Uterus (tissue), 4 donors: ENCODE measurements at regions of chr2 and their contacts with region 1.

Region 1: GRCh38 chr2:70142590-70143313 is 48.1 kb downstream of the C2orf42 start:
- DNase-seq: peak; percentile 99 to 100
- H3K4me3 ChIP-seq: peak overlapping the region; percentile 54 to 59
- H3K27ac ChIP-seq: peak overlapping the region; percentile 99 to 100
- H3K4me1 ChIP-seq: no peaks in the 10 kb centered on the region
- H3K27me3 ChIP-seq: no peaks in the 10 kb centered on the region
- CTCF ChIP-seq: peak; percentile 93 to 100 (median 100)
- POLR2A ChIP-seq: peak; percentile 70 to 96

Region 2: GRCh38 chr2:69914170-69914960 is 228.4 kb before region 1 on chr2:
- intact Hi-C with region 1: loop called (anchors 5 kb)
- DNase-seq: peak; percentile 99 to 100
- H3K4me3 ChIP-seq: peak overlapping the region; percentile 64 to 78
- H3K27ac ChIP-seq: peak overlapping the region; percentile 97 to 98
- H3K4me1 ChIP-seq: no peaks in the 10 kb centered on the region
- H3K27me3 ChIP-seq: no peaks in the 10 kb centered on the region
- CTCF ChIP-seq: peak in 2 of 4 experiments; percentile 22 to 30
- POLR2A ChIP-seq: peak; percentile 91 to 99

Region 3: DNA sequence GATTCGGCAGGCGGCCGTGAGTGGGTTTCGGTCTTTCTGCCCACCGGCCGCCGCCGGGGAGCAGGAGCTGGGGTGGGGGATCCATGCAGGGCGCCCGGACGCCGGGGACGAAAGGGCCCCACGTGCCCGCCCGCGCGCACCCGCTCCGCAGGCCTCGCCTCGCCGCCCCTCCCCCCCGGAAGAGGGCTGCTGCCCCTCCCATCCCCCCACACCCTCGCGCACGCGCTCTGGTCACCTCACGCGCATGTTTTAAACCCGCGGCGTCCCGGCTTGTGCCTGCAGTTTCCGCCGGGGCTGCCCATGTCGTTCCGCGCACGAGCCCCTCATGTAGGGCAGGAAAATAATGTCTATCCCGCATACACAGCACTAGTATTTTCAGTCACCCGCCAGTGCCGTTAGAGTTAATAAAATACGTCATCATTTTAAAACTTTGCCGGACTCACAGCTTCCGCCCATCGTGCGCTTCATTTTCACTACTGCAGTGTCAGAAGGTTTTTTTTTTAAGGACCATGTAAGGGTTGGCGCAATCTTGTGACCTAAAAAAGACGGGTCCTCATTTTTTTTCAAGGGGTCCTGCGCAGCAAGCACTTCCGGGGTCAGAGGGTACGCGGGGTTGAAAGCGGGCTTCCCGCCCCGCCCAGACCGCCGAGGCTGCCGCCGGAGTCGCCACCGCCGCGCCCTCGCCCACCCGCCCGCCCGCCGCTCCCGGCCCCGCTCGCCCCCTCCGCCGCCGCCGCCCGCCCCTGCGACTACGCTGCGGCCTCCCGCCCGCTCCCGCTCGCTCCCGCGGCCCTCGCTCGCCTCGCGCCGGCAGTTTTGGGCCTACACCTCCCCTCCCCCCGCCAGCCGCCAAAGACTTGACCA is 55.7 kb before region 1 on chr2 and contains the start of gene PCBP1:
- intact Hi-C with region 1: loop called (anchors 2 kb)
- DNase-seq: peak; percentile 96
- H3K4me3 ChIP-seq: peak within 1 kb of the TSS; percentile 74 to 78
- H3K27ac ChIP-seq: peak within 1 kb of the TSS; percentile 99 to 100
- H3K4me1 ChIP-seq: peaks cover 0 to 6% of the 10 kb centered on the region in 2 donors
- H3K27me3 ChIP-seq: no peaks in the 10 kb centered on the region
- CTCF ChIP-seq: peak in 1 of 4 experiments; percentile 3
- POLR2A ChIP-seq: peak; percentile 82 to 94
- total RNA-seq, gene PCBP1: 55.5 to 294 (median 101) TPM

Region 4: DNA sequence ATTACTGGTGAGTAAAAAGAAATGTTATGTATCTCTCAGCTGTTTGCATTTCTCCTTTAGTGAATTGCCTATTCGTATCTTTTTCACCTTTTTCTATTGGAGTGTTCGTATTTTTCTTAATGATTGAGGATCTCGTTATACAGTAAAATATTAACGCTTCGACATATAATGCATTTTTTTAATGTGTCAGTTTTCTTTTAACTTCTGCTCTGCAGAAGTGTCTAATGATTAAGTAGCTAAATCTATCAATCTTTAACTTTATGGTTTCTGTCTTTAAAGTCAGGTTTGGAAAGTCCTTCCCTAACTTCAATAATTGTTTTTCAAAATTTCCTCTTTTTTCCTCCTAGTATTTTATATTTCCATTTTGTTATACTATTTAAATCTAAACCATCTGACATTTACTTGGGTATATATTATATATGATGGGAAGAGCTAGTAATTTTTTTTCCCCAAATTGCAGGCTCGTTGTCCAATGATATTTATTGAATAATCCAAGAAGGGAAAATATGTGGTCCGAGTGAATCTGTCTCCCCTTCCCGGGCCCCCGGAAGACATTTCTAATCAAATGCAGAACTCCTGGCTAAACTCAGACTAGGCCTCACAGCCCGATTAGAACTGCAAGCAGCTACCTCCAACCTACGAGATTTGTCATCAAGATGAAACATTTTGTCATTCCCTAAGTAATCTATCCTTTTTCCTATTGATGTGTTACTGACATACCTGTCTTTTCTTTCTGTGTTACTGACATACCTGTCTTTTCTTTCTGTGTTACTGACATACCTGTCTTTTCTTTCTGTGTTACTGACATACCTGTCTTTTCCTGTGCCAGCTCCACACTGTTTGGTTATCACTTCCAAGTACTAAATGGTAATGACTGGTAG is 38.3 kb before region 1 on chr2:
- intact Hi-C with region 1: no loop called
- DNase-seq: peak; percentile 66 to 68
- H3K4me3 ChIP-seq: no peak overlapping the region
- H3K27ac ChIP-seq: peak overlapping the region; percentile 78 to 88
- H3K4me1 ChIP-seq: peaks cover 12 to 21% of the 10 kb centered on the region in 2 donors
- H3K27me3 ChIP-seq: no peaks in the 10 kb centered on the region
- CTCF ChIP-seq: no peak
- POLR2A ChIP-seq: no peak